Activated CD4-positive, alpha-beta memory T cell treated with anti-CD3 and anti-CD28 coated beads for 36 hours (primary cell): ENCODE measurements at regions of chr22 and their contacts with region 1.

Region 1: DNA sequence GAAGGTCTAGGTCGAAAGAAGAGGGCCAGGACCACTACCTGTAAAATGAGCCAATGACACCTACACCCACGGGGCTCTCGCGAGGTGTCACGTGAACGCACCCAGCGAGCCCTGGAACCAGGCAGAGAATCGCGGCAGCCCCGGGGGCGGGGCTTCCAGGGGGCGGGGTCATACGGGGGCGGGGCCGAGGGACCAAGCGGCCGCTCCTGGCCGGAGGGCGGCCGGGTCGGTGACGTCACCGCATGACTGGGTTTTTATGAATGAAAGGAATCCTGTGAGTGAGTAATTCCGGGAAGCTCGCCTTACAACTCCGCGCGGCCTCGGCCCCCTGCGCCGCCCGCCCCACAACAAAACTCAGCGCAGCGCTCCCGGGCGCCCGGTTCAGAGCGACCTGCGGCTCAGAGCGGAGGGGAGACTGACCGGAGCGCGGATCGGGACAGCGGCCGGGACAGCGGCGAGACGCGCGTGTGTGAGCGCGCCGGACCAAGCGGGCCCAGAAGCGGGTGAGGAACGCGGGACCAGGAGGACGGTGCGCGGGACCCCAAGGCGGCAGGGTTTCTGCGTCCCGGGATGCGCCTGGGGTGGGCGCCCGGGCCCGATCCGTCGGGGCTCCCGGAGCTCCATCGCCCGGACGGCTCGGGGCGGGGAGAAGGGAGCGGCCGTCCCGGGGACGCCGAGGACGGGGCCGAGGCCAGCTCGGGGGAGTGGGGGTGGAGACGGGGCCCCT is at the start of gene MAFF:
- DNase-seq: peak; percentile 98
- H3K4me3 Mint-ChIP-seq: peak within 1 kb of the TSS; percentile 83
- H3K27ac Mint-ChIP-seq: peak within 1 kb of the TSS; percentile 84
- H3K4me1 Mint-ChIP-seq: peaks cover 37% of the 10 kb centered on the region
- H3K27me3 Mint-ChIP-seq: no peaks in the 10 kb centered on the region
- total RNA-seq, gene MAFF: 15.5 to 15.9 TPM

Region 2: DNA sequence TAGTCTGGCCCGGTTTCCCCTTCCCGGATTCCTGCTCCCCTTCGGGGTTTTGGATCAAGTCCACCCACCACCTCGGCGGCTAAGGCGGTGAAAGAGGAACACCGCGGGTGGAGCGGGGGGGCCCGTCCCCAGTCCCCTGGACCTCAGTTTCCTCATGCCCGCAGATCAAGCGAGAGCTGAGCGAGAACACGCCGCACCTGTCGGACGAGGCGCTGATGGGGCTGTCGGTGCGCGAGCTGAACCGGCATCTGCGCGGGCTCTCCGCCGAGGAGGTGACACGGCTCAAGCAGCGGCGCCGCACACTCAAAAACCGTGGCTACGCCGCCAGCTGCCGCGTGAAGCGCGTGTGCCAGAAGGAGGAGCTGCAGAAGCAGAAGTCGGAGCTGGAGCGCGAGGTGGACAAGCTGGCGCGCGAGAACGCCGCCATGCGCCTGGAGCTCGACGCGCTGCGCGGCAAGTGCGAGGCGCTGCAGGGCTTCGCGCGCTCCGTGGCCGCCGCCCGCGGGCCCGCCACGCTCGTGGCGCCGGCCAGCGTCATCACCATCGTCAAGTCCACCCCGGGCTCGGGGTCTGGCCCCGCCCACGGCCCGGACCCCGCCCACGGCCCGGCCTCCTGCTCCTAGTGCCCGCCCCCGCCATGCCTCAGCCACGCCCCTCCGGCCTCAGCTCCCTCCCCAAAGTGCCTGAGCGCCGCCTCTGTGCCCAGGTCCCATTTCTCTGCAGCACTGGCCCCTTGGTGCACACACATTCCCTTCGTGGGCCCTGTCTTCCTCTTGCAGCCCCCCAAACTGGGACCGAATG is 12.6 kb after region 1 on chr22:
- CTCF ChIA-PET with region 1: interaction called, 4 read pairs
- POLR2A ChIA-PET with region 1: interaction called, 10 read pairs
- intact Hi-C with region 1: no loop called
- DNase-seq: peak; percentile 81
- H3K4me3 Mint-ChIP-seq: no peak overlapping the region
- H3K27ac Mint-ChIP-seq: no peak overlapping the region
- H3K4me1 Mint-ChIP-seq: peaks cover 46% of the 10 kb centered on the region
- H3K27me3 Mint-ChIP-seq: no peaks in the 10 kb centered on the region

Region 3: GRCh38 chr22:38246692-38247091 is 44.8 kb after region 1 on chr22:
- CTCF ChIA-PET with region 1: no interaction called
- POLR2A ChIA-PET with region 1: no interaction called
- intact Hi-C with region 1: no loop called
- DNase-seq: no peak
- H3K4me3 Mint-ChIP-seq: no peak overlapping the region
- H3K27ac Mint-ChIP-seq: no peak overlapping the region
- H3K4me1 Mint-ChIP-seq: no peaks in the 10 kb centered on the region
- H3K27me3 Mint-ChIP-seq: no peaks in the 10 kb centered on the region